GM18951 (cell line): ENCODE measurements at regions of chrX and their contacts with region 1.

Region 1: GRCh38 chrX:79270401-79270800 is 96.7 kb downstream of the ITM2A start:
- POLR2A ChIP-seq: no peak

Region 2: DNA sequence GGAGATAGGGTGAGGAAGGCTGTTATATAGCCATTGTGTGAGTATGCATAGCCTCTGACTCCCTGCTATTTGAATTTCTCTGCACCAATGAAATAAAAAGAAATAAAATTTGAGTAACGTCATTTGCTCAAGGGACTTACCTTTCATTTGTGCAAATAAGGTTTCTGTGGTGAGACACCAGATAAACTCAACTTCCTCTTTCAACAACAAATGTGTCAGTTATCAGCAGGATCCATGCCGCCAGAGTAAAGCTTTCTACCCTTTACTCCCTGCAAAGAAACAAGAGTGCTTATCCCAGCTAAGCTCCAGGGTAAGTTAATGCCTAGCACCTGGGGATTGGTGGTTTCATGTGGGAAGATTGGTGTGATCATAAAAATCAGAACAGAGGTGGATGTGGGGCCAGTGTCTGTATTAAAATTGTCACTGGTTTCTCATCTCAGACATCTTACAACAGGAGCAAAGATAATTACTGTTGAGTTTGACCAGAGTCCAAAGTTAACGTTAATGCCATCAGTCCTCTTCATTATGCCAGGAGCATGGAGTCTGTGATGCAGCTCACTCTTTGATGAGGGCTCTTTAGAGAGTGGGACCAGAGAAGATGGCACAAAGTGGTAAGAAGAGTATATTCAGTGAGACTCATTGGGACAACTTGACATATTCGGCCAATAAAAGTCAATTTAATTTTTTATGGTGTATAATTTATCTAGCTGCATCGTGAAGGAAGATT is 325.1 kb before region 1 on chrX and contains the start of gene P2RY10:
- in situ Hi-C with region 1: loop called (anchors 25 kb)
- POLR2A ChIP-seq: peak; percentile 48

Region 3: GRCh38 chrX:79081895-79082512 is 188.4 kb before region 1 on chrX:
- in situ Hi-C with region 1: loop called (anchors 10 kb)
- POLR2A ChIP-seq: no peak

Region 4: GRCh38 chrX:79161655-79162054 is 108.7 kb before region 1 on chrX:
- in situ Hi-C with region 1: loop called (anchors 10 kb)
- POLR2A ChIP-seq: no peak

Region 5: DNA sequence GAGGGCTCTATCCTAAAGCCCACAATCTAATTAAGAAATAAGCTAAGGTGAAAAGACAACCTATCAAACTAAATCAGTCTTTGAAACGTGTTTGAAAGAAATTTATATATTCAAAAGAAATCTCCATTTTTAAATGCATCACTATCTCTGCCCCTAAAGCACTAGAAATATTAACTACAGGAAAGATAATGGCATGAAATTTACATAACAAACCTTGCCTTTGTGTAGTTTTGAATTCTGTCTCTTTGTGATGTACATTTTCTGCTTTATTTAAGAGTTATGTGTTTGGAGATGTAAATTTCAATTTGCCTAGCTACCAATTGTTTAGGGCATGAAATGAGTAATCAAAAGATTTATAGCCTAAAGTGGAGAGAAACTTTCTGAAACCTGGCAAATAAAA is 458.0 kb after region 1 on chrX:
- in situ Hi-C with region 1: no loop called
- POLR2A ChIP-seq: no peak